ENCODE measurements at regions of chr13 and their contacts with region 1.

Region 1: GRCh38 chr13:98476538-98476966 is 100.4 kb downstream of the STK24 start:
- DNase-seq: peak; percentile 43 to 86 (median 78)
- ATAC-seq: peak; percentile 96
- H3K4me3 ChIP-seq: peak overlapping the region; percentile 48
- H3K4me3 Mint-ChIP-seq: peak overlapping the region; percentile 52 to 86 (median 76)
- H3K27ac ChIP-seq: peak overlapping the region; percentile 52
- H3K27ac Mint-ChIP-seq: peak overlapping the region; percentile 82 to 94 (median 86)
- H3K4me1 ChIP-seq: peaks cover 36 to 37% of the 10 kb centered on the region in 2 donors
- H3K4me1 Mint-ChIP-seq: peaks cover 55 to 76% (median 67%) of the 10 kb centered on the region in 7 donors
- H3K27me3 ChIP-seq: no peaks in the 10 kb centered on the region
- H3K27me3 Mint-ChIP-seq: no peaks in the 10 kb centered on the region

Region 2: GRCh38 chr13:97975848-97976609 is 500.5 kb before region 1 on chr13:
- CTCF ChIA-PET with region 1: no interaction called
- POLR2A ChIA-PET with region 1: no interaction called
- intact Hi-C with region 1: loop called (anchors 1 to 10 kb)
- DNase-seq: peak; percentile 53 to 94 (median 88)
- ATAC-seq: peak; percentile 97
- H3K4me3 ChIP-seq: peak overlapping the region; percentile 69
- H3K4me3 Mint-ChIP-seq: peak overlapping the region; percentile 88 to 100 (median 96)
- H3K27ac ChIP-seq: peak overlapping the region; percentile 88
- H3K27ac Mint-ChIP-seq: peak overlapping the region; percentile 90 to 98 (median 96)
- H3K4me1 ChIP-seq: peaks cover 12 to 15% of the 10 kb centered on the region in 2 donors
- H3K4me1 Mint-ChIP-seq: peaks cover 17 to 44% (median 38%) of the 10 kb centered on the region in 7 donors
- H3K27me3 ChIP-seq: no peaks in the 10 kb centered on the region
- H3K27me3 Mint-ChIP-seq: peaks cover 0 to 5% (median 0%) of the 10 kb centered on the region in 5 donors

Region 3: DNA sequence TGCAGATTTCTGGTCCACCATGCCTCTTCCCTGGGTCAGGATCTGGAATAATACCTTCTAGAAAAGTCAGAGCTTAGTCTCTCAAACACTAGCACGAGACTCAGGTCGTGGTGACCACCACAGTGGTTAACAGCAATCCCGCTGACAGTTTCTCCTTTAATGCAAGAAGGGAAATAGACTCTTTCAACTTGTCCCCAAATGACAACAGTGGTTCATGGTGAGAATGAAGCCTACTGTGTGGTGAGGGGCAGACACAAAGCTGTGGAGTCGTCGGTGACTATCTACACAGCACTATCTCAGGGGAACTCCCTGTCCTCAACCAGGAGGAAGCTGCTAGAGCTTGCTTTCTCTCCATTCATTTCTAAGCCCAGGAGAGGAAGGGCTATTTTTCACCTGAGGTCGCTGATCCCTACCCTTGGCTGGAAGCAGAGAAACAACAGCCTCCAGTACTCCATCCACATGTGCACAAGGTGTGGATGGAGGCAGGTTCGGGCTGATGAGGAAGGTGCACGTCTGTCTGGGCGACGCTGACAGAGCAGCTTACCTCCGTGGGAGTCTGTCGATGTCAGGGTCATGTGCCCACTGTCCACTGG is 27.9 kb after region 1 on chr13:
- CTCF ChIA-PET with region 1: no interaction called
- POLR2A ChIA-PET with region 1: no interaction called
- intact Hi-C with region 1: loop called (anchors 1 to 2 kb)
- DNase-seq: no peak
- ATAC-seq: peak; percentile 61
- H3K4me3 ChIP-seq: no peak overlapping the region
- H3K4me3 Mint-ChIP-seq: peak overlapping the region in 5 of 10 donors; percentile 0 to 37 (median 21)
- H3K27ac ChIP-seq: no peak overlapping the region
- H3K27ac Mint-ChIP-seq: peak overlapping the region in 7 of 9 donors; percentile 10 to 79 (median 27)
- H3K4me1 ChIP-seq: peaks cover 30 to 33% of the 10 kb centered on the region in 2 donors
- H3K4me1 Mint-ChIP-seq: peaks cover 64 to 97% (median 94%) of the 10 kb centered on the region in 7 donors
- H3K27me3 ChIP-seq: no peaks in the 10 kb centered on the region
- H3K27me3 Mint-ChIP-seq: no peaks in the 10 kb centered on the region

Region 4: DNA sequence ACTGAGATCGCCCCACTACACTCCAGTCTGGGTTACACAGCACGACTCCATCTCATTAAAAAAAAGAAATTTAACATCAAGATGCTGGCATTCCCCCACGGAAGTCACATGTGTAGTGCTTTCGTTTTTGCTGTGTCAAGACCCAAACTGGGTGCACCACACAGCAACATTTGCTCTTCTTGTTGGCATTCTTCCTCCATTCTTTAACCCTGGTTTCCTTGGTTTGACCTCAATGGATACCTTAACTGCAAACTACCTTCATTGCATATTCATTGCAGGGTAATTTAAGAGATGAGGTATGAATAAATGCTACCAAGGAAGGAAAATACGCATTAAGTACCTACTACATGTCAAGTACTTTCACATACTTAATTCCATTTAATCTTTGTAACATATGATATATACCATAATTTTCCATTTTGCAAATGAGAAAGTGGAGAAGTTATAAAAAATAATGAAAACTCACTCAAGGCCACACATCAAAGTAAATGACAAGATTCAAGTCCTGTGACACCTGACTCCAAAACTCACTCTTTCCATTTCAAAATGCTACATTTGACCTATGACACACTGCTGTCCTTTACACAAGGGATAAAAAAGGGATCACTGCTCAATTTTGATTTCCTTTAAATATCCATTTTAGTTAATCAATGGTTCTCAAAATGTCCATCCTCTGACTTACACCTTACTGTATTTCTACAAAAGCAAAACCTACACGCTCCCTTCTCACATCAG is 41.2 kb after region 1 on chr13:
- CTCF ChIA-PET with region 1: no interaction called
- POLR2A ChIA-PET with region 1: no interaction called
- intact Hi-C with region 1: loop called in 1 of 2 experiments (anchors 1 kb)
- DNase-seq: peak in 2 of 9 donors; percentile 19 to 31
- ATAC-seq: peak; percentile 78
- H3K4me3 ChIP-seq: no peak overlapping the region
- H3K4me3 Mint-ChIP-seq: peak overlapping the region in 5 of 10 donors; percentile 14 to 51 (median 24)
- H3K27ac ChIP-seq: no peak overlapping the region
- H3K27ac Mint-ChIP-seq: peak overlapping the region in 7 of 9 donors; percentile 33 to 88 (median 50)
- H3K4me1 ChIP-seq: peaks cover 25 to 32% of the 10 kb centered on the region in 2 donors
- H3K4me1 Mint-ChIP-seq: peaks cover 46 to 97% (median 91%) of the 10 kb centered on the region in 7 donors
- H3K27me3 ChIP-seq: no peaks in the 10 kb centered on the region
- H3K27me3 Mint-ChIP-seq: no peaks in the 10 kb centered on the region

Region 5: GRCh38 chr13:98535501-98536354 is 59.2 kb after region 1 on chr13:
- CTCF ChIA-PET with region 1: no interaction called
- POLR2A ChIA-PET with region 1: no interaction called
- intact Hi-C with region 1: no loop called
- DNase-seq: no peak
- ATAC-seq: no peak
- H3K4me3 ChIP-seq: no peak overlapping the region
- H3K4me3 Mint-ChIP-seq: peak overlapping the region in 8 of 10 donors; percentile 25 to 50 (median 40)
- H3K27ac ChIP-seq: no peak overlapping the region
- H3K27ac Mint-ChIP-seq: peak overlapping the region in 6 of 9 donors; percentile 32 to 87 (median 50)
- H3K4me1 ChIP-seq: peaks cover 54 to 57% of the 10 kb centered on the region in 2 donors
- H3K4me1 Mint-ChIP-seq: peaks cover 70 to 96% (median 94%) of the 10 kb centered on the region in 7 donors
- H3K27me3 ChIP-seq: no peaks in the 10 kb centered on the region
- H3K27me3 Mint-ChIP-seq: no peaks in the 10 kb centered on the region

Region 6: DNA sequence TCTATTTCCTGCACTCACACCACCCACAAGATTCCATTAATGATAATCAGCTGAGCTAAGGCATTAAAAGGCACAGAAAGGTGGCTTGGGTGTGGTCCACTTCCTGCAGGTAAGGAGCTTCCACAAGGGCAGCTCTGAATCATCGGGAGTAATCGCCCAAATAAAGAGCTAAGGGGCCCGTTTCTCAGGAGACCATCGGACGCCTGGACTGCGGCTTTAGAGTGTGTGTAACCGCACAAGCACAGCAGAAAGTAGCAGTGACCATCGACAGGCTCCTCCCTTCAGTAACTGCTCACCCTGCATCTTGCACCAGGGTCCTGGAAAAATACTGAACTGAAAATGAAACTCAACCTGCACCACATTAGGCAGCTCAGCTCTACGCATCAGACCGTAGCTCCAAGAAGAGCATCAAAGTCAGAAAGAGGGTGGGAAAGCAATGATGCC is 94.4 kb after region 1 on chr13:
- CTCF ChIA-PET with region 1: no interaction called
- POLR2A ChIA-PET with region 1: interaction called, 5 read pairs
- intact Hi-C with region 1: loop called in 1 of 2 experiments (anchors 1 kb)
- DNase-seq: peak in 6 of 9 donors; percentile 51 to 72 (median 60)
- ATAC-seq: peak; percentile 70
- H3K4me3 ChIP-seq: peak overlapping the region; percentile 63
- H3K4me3 Mint-ChIP-seq: peak overlapping the region; percentile 84 to 99 (median 90)
- H3K27ac ChIP-seq: peak overlapping the region; percentile 85
- H3K27ac Mint-ChIP-seq: peak overlapping the region; percentile 84 to 98 (median 96)
- H3K4me1 ChIP-seq: peaks cover 76 to 83% of the 10 kb centered on the region in 2 donors
- H3K4me1 Mint-ChIP-seq: peaks cover 82 to 97% (median 96%) of the 10 kb centered on the region in 7 donors
- H3K27me3 ChIP-seq: no peaks in the 10 kb centered on the region
- H3K27me3 Mint-ChIP-seq: no peaks in the 10 kb centered on the region

Region 7: GRCh38 chr13:98653463-98653985 is 177.0 kb after region 1 on chr13:
- CTCF ChIA-PET with region 1: interaction called, 4 read pairs
- POLR2A ChIA-PET with region 1: no interaction called
- intact Hi-C with region 1: loop called in 1 of 2 experiments (anchors 1 kb)
- DNase-seq: peak; percentile 37 to 67 (median 63)
- ATAC-seq: peak; percentile 96
- H3K4me3 ChIP-seq: no peak overlapping the region
- H3K4me3 Mint-ChIP-seq: peak overlapping the region in 7 of 10 donors; percentile 51 to 84 (median 62)
- H3K27ac ChIP-seq: no peak overlapping the region
- H3K27ac Mint-ChIP-seq: peak overlapping the region in 5 of 9 donors; percentile 16 to 88 (median 58)
- H3K4me1 ChIP-seq: no peaks in the 10 kb centered on the region
- H3K4me1 Mint-ChIP-seq: peaks cover 4 to 9% (median 5%) of the 10 kb centered on the region in 7 donors
- H3K27me3 ChIP-seq: no peaks in the 10 kb centered on the region
- H3K27me3 Mint-ChIP-seq: peaks cover 0 to 6% (median 0%) of the 10 kb centered on the region in 5 donors

Measured in naive thymus-derived CD4-positive, alpha-beta T cell (primary cell).